ENCODE measurements at regions of chrX and their contacts with region 1.

Region 1: GRCh38 chrX:120664081-120664480 is 34.2 kb upstream of the C1GALT1C1 start:
- DNase-seq: peak in 1 of 2 experiments; percentile 42
- ATAC-seq: no peak; a peak in 1 of 6 replicates
- H3K4me3 ChIP-seq: no peak overlapping the region
- H3K27ac ChIP-seq: peak overlapping the region in 1 of 2 experiments; percentile 50; a peak in 2 of 6 replicates
- H3K4me1 ChIP-seq: 0 out of 3 replicates have a peak, but pooled peaks cover 4% of the 10 kb centered on the region
- CTCF ChIP-seq: peak; percentile 55
- EP300 ChIP-seq: no peak
- POLR2A ChIP-seq: no peak
- RAD21 ChIP-seq: peak; percentile 61 to 69

Region 2: GRCh38 chrX:120499301-120500072 is 164.6 kb before region 1 on chrX:
- CTCF ChIA-PET with region 1: interaction called, 18 read pairs
- POLR2A ChIA-PET with region 1: no interaction called
- DNase-seq: no peak
- ATAC-seq: no peak
- H3K4me3 ChIP-seq: no peak overlapping the region
- H3K27ac ChIP-seq: peak overlapping the region in 1 of 2 experiments; percentile 35; a peak in 1 of 6 replicates
- H3K4me1 ChIP-seq: no peaks in the 10 kb centered on the region
- CTCF ChIP-seq: no peak
- EP300 ChIP-seq: no peak
- POLR2A ChIP-seq: no peak
- RAD21 ChIP-seq: no peak

Region 3: DNA sequence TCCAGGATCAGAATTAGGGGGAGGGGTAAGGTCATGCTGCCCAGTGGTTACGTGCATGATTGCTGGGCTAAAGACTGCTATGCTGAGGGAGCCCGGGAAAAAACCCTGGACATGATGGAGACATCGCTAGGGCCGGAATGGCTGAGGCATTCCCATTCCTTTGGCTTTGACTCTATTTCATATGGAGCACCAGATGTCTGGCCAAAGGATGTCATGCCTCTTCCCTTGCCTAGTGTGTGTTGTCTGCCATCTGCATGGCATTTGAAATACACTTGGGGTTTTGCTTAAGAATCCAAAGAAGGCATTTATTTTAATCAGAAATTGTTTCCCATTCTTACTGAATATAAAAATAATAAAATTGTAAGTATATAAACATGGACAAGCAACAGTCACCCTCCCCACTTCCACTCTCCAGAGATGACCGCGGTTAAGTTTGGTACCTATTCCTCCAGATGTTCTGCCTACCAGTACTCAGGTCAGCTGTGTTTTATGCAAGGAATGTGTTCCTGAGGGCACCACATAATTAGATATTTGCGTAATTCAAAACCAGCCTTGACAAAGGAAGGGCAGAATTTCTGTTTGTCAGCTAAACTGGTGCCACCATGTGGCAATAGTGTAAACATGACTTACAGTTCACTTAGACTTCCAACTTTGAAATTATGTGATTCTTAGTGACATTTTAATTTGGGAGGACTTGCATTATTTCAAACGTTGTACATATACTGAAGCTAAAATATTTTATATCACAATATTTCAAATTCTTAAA is 105.7 kb after region 1 on chrX:
- CTCF ChIA-PET with region 1: interaction called, 10 read pairs
- POLR2A ChIA-PET with region 1: no interaction called
- DNase-seq: peak; percentile 3 to 74
- ATAC-seq: peak; percentile 59 to 72; a peak in 5 of 6 replicates
- H3K4me3 ChIP-seq: no peak overlapping the region
- H3K27ac ChIP-seq: peak overlapping the region; percentile 60 to 80
- H3K4me1 ChIP-seq: peaks cover 18% of the 10 kb centered on the region
- CTCF ChIP-seq: peak; percentile 56
- EP300 ChIP-seq: no peak
- POLR2A ChIP-seq: no peak
- RAD21 ChIP-seq: peak; percentile 64 to 71

Measured in A549 (cell line).